Thyroid gland (tissue), 4 donors: ENCODE measurements at regions of chr9 and their contacts with region 1.

Region 1: DNA sequence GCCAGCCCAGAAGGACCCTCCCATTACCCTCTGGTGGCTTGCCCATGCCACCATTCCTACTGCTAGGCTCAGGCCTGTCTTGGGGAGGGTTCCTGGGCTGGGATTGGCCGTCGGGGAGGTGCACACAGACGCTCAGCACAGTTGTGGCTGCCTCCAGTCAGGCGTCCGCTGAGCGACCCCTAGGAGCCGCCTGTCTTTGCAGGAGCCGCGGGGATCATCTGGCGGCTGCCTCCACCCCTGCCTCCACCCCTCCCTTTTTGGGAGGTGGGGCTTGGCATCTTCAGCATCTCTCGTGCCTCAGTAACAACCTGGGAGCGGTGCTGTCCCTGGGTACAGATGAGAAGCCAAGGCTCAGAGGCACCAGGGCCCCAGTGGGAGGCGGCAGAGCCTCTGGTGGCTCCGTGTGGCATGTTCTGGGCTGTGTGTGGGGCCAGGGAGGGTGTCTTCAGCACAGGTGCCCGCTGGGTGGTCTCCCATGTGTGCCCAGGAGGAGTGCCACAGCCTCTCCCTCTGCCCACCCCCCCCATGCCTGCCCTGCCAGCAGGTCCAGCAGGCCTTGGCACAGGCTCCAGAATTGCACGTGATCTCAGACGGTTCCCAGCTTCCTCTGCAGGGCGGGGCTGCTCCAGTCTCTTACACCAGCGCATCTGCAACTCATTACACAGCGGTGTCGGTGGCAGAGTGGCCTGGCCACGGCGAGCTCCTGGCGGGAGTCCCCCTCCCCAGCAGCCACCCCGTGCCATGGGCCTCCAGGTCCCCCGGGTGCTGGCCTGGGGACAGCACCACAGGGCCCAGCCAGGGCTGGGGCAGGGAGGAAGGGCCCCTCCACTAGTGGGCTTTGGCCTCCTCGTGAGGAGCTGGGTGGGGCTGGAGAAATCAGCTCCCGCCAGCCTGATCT is 39.8 kb downstream of the RXRA start:
- DNase-seq: peak; percentile 95 to 96
- H3K4me3 ChIP-seq: no peak overlapping the region
- H3K27ac ChIP-seq: peak overlapping the region; percentile 26 to 72 (median 70)
- H3K4me1 ChIP-seq: peaks cover 43 to 66% of the 10 kb centered on the region in 2 donors
- H3K27me3 ChIP-seq: no peaks in the 10 kb centered on the region
- CTCF ChIP-seq: peak in 1 of 6 experiments; percentile 12
- POLR2A ChIP-seq: peak in 1 of 2 donors; percentile 5

Region 2: GRCh38 chr9:134111064-134111463 is 255.0 kb before region 1 on chr9:
- intact Hi-C with region 1: no loop called
- DNase-seq: no peak
- H3K4me3 ChIP-seq: no peak overlapping the region
- H3K27ac ChIP-seq: no peak overlapping the region
- H3K4me1 ChIP-seq: peaks cover 0 to 6% of the 10 kb centered on the region in 2 donors
- H3K27me3 ChIP-seq: no peaks in the 10 kb centered on the region
- CTCF ChIP-seq: no peak
- POLR2A ChIP-seq: no peak

Region 3: GRCh38 chr9:134293611-134294165 is 72.4 kb before region 1 on chr9:
- intact Hi-C with region 1: no loop called
- DNase-seq: no peak
- H3K4me3 ChIP-seq: no peak overlapping the region
- H3K27ac ChIP-seq: no peak overlapping the region
- H3K4me1 ChIP-seq: peaks cover 0 to 8% of the 10 kb centered on the region in 2 donors
- H3K27me3 ChIP-seq: no peaks in the 10 kb centered on the region
- CTCF ChIP-seq: no peak
- POLR2A ChIP-seq: no peak

Region 4: GRCh38 chr9:134333234-134333873 is 32.7 kb before region 1 on chr9:
- intact Hi-C with region 1: loop called (anchors 5 kb)
- DNase-seq: no peak
- H3K4me3 ChIP-seq: no peak overlapping the region
- H3K27ac ChIP-seq: peak overlapping the region in 1 of 3 donors; percentile 43
- H3K4me1 ChIP-seq: peaks cover 89 to 96% of the 10 kb centered on the region in 2 donors
- H3K27me3 ChIP-seq: no peaks in the 10 kb centered on the region
- CTCF ChIP-seq: no peak
- POLR2A ChIP-seq: no peak